ENCODE measurements at regions of chr17 and their contacts with region 1.

Region 1: DNA sequence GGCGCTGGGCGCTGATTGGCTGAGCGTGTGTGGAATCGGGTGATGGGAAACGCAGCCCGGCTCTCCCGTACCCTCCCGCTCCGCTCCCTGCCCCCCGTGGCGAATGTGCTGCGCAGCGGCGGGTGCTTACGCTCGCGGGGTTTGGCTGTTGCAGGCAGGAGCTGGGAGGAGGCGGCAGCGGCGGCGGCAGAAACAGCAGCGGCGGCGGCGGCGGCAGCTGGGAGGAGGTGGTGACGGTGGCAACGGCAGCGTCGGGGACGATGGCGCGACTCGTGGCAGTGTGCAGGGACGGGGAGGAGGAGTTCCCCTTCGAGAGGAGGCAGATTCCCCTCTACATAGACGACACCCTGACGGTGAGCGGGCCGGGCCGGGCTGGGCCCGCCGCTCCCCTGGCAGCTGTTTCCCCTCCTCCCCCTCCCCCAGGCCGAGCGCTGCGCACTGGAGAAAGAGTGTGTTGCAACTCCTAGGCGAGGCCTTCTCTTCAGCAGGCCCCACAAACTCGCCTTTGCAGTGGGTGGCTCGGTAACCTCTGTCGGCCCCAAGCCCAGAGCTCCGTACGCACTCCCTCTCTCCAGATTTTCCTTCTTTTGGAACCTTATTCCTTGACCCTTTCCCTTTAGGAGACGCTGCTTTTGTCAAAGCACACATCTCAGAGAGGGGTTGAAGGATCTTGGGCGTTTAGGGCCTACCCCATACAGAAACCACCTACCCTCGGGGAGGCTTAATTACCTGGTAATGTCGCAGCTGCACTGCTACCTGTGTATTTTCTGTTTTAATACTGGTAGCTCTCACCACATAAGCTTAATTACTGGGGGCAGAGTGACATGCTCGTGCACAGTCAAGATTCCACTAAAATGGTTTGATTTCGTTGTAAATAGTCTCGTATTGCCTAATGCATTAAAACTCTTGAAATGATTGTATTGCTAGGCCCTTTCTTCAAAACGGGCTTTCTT is 1.0 kb downstream of the GGNBP2 start:
- DNase-seq: peak; percentile 98 to 99
- ATAC-seq: peak; percentile 96
- H3K4me3 ChIP-seq: peak overlapping the region; percentile 9 to 53
- H3K27ac ChIP-seq: peak overlapping the region; percentile 20 to 30
- H3K4me1 ChIP-seq: no peaks in the 10 kb centered on the region
- H3K27me3 ChIP-seq: no peaks in the 10 kb centered on the region

Region 2: DNA sequence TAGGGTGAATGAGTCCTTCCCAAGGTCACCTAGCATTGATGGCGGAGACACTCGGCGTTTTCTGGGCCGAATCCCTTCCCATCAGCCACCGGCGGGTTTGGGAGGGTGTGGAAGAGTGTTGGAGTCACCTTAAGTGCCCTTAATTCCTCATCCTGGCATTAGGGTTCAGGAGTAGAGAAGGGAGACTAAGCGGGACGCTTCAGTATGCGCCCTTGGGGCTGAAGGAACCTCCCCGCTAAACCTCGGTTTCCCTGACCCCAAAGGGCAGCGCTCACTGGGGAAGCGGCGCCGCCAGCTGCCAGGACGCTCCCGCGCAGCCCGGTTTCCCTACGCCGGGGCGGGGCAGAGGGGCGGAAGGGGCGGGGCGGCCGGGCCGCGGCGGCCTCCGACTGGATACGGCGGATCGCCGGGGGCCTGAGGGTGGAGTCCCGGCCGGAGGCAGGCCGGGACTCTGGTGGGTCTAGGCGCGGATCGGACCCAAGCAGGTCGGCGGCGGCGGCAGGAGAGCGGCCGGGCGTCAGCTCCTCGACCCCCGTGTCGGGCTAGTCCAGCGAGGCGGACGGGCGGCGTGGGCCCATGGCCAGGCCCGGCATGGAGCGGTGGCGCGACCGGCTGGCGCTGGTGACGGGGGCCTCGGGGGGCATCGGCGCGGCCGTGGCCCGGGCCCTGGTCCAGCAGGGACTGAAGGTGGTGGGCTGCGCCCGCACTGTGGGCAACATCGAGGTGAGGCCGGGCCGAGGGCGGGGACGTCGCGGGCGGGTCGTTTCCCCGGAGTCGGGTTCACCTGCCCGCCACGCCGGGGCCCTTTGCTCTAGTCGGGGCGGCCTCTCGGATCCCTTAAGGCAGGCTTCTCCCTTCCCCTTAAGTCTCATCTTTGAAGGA is 45.9 kb after region 1 on chr17 and contains the start of gene DHRS11:
- intact Hi-C with region 1: loop called in 1 of 2 experiments (anchors 5 kb)
- DNase-seq: peak; percentile 87 to 96
- ATAC-seq: peak; percentile 95
- H3K4me3 ChIP-seq: peak within 1 kb of the TSS; percentile 30 to 83
- H3K27ac ChIP-seq: no peak within 1 kb of the TSS
- H3K4me1 ChIP-seq: no peaks in the 10 kb centered on the region
- H3K27me3 ChIP-seq: no peaks in the 10 kb centered on the region
- total RNA-seq, gene DHRS11: 6.0 to 6.5 TPM

Region 3: DNA sequence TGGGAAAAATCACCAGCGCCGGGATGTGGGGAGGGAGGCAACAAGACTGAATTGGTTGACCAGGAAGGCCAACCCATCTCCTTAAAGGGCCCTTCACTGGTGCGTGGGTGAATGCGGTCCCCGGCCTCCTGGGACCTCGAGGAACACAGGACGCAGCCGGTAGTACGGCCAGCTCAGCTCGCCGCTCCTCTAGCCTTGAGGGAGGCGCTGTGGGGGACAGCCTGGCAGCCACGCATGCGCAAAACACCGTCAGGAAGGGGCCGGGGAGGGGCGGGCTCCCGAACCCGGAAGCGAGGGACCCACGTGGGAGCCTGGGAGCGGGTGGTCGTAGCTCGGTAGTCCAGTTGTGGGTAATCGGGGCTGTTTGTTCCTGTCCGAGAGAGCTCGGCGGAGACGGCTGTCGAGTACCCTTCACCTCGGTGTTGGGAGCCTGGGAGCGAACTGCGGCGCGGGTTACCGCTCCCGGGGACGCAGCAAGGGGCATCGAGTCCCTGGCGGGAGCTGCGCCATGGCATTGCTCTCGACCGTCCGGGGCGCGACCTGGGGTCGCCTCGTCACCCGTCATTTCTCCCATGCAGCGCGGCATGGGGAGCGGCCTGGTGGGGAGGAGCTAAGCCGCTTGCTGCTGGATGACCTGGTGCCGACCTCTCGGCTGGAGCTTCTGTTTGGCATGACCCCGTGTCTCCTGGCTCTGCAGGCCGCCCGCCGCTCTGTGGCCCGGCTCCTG is 55.7 kb after region 1 on chr17 and contains the start of gene MRM1:
- intact Hi-C with region 1: loop called in 1 of 2 experiments (anchors 5 kb)
- DNase-seq: peak; percentile 97 to 98
- ATAC-seq: peak; percentile 96
- H3K4me3 ChIP-seq: peak within 1 kb of the TSS; percentile 50 to 55
- H3K27ac ChIP-seq: peak within 1 kb of the TSS; percentile 2 to 55
- H3K4me1 ChIP-seq: no peaks in the 10 kb centered on the region
- H3K27me3 ChIP-seq: no peaks in the 10 kb centered on the region
- total RNA-seq, gene MRM1: 2.7 to 3.6 TPM

Region 4: DNA sequence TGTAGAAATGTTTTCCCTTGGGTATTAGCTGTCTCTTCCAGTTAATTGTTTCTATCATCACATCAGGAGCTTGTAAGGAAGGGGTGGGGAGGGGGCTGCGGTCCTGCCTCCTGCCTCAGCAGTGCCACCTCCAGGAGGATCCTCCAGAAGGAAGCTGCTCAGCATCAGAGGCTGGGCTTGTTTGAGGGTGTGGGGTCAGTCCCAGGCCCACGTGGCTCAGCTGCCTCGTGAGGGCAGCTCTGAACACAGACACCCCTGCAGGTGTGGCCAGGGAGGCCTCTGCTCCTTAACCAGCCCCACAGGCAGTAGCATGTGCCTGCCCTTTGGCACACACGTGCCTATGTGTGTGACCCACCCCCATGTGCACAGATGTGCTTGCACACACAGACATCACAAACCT is 101.9 kb after region 1 on chr17:
- intact Hi-C with region 1: no loop called
- DNase-seq: no peak
- ATAC-seq: no peak
- H3K4me3 ChIP-seq: no peak overlapping the region
- H3K27ac ChIP-seq: no peak overlapping the region
- H3K4me1 ChIP-seq: no peaks in the 10 kb centered on the region
- H3K27me3 ChIP-seq: no peaks in the 10 kb centered on the region

Region 5: DNA sequence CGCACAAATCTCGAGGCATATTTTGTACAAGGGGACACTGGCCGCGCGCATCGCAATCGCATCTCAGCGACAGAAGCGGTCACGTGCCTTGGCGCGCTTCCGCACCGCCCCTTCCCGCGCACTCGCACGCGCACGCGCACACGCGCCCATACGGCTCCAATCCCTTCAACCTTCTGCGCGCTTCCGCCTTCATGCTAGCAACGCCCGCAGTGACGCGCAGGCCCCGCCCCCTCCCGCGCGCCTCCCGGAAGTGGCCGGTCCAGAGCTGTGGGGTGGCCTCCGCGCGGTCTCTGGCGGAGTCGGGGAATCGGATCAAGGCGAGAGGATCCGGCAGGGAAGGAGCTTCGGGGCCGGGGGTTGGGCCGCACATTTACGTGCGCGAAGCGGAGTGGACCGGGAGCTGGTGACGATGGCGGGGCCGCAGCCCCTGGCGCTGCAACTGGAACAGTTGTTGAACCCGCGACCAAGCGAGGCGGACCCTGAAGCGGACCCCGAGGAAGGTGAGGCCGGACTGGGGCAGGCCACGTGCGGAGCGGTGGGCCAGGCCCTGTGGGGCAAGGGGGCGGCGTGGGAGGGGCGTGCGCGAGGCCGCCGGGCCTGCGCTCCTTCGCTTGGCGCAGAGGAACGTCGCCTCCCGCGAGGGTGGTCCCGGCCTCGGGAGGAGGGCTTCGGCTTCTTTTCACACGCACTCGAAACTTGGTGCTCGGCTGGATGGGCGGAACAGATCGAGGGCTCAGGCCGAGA is 403.1 kb after region 1 on chr17 and contains the start of gene AATF:
- intact Hi-C with region 1: loop called (anchors 5 to 10 kb)
- DNase-seq: peak; percentile 98 to 99
- ATAC-seq: peak; percentile 99
- H3K4me3 ChIP-seq: peak within 1 kb of the TSS; percentile 35 to 71
- H3K27ac ChIP-seq: peak within 1 kb of the TSS; percentile 16 to 72
- H3K4me1 ChIP-seq: peaks cover 0 to 3% of the 10 kb centered on the region in 2 donors
- H3K27me3 ChIP-seq: peaks cover 0 to 2% of the 10 kb centered on the region in 2 donors
- total RNA-seq, gene AATF: 36.1 to 41.0 TPM

Measured in aorta (tissue), 5 donors.